ENCODE measurements at regions of chr19 and their contacts with region 1.

Region 1: DNA sequence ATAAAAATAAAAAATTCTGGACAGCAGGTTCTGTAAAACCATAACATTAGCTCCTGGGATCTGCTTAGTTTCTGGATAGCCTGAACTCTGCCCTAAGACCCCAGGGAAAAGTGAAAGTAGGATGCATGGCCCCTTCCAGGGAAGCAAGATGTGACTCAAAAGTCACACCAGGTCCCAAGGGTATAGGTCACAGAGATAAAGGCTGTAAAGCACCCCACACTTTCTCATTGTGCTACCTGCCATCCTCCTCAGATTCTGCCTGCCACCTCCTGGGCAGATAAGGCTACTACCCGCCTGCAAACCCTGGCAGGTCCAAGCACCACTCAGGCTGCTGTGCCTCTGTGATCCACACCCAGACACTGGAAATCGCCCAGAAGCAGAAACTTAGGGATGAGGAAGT is 20.6 kb downstream of the FFAR2 start:
- ATAC-seq: peak in 4 of 8 experiments; percentile 59 to 97 (median 95)
- H3K4me3 ChIP-seq: no peak overlapping the region
- H3K27ac ChIP-seq: no peak overlapping the region
- H3K4me1 ChIP-seq: no peaks in the 10 kb centered on the region

Region 2: DNA sequence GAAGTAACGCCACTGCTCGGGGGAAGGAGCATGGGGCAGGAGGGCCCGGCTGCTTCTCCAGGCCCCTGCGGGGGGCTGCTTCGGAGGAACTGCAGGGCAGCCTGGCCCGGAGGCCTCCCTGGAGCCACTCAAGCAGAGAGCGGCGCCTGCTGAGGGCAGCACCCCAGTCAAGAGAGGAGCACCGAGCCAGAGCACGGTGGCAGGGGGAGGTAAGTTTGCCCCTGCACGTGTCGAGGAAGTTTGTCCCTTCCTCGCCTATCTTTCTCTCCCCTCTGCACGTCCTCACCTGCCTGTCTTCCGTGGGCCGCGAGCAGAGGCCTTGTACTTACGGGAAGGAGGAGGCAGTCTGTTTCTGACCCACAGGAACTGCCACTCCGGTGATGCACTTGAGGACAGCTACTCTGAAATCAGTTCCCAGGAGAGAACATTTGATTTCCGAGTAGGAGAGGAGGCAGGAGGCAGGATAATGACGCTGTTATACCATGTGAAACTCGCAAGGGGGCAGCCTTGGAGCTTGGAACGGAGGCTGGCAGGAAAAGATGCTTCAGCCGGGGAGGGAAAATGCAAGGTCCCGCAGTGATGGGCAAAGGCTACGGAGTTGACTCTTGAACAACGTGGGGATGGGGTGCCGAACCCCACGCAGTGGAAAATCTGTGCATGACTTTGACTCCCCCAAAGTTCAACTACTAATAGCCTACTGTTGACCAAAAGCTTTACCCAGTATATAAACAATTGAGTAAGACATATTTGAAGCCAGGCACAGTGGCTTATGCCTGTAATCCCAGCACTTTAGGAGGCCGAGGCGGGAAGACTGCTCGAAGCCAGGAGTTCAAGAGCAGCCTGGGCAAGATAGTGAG is 116.0 kb before region 1 on chr19:
- in situ Hi-C with region 1: loop called in 1 of 9 experiments (anchors 25 kb)
- ATAC-seq: peak; percentile 75 to 93 (median 83)
- H3K4me3 ChIP-seq: no peak overlapping the region
- H3K27ac ChIP-seq: no peak overlapping the region
- H3K4me1 ChIP-seq: no peaks in the 10 kb centered on the region